WTC11 (cell line): ENCODE measurements at regions of chr19 and their contacts with region 1.

Region 1: GRCh38 chr19:13277104-13277809 is 127.0 kb downstream of the IER2 start:
- DNase-seq: peak; percentile 48
- ATAC-seq: peak; percentile 76
- H3K4me3 Mint-ChIP-seq: no peak overlapping the region
- H3K27ac Mint-ChIP-seq: no peak overlapping the region
- H3K4me1 Mint-ChIP-seq: peaks cover 6% of the 10 kb centered on the region
- H3K27me3 Mint-ChIP-seq: no peaks in the 10 kb centered on the region
- CTCF ChIP-seq: peak; percentile 65

Region 2: DNA sequence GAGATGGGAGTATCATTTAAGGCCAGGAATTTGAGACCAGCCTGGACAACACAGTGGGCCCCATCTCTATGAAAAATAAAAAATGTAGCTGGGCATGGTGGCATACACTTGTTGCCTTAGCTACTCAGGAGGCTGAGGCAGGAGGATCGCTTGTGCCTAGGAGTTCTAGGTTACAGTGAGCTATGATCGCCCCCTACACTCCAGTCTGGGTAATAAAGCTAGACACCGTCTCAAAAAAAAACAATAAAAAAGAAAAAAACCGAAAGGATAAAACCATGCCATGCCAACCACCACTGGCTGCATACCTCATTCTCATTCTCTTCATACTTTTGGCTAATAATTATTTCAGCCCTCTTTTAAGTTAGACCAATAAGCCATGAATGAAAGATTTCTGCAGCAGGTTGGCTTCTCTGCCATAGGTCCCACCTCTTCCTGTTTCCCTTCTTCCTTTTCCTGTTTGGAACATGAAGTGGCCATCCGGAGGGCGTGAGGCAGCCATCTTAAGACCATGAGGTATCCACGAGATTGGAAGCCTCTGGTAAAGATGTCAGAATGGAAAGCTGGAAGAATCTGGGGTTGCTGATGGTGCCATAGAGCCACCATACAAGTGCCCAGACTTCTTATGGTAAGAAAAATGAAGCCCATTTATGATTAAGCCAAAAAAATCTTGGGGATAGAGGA is 57.7 kb after region 1 on chr19:
- CTCF ChIA-PET with region 1: interaction called, 14 read pairs
- POLR2A ChIA-PET with region 1: no interaction called
- DNase-seq: no peak
- ATAC-seq: no peak
- H3K4me3 Mint-ChIP-seq: no peak overlapping the region
- H3K27ac Mint-ChIP-seq: no peak overlapping the region
- H3K4me1 Mint-ChIP-seq: peaks cover 9% of the 10 kb centered on the region
- H3K27me3 Mint-ChIP-seq: no peaks in the 10 kb centered on the region; the same call in 1 of the 2 replicates
- CTCF ChIP-seq: no peak

Region 3: DNA sequence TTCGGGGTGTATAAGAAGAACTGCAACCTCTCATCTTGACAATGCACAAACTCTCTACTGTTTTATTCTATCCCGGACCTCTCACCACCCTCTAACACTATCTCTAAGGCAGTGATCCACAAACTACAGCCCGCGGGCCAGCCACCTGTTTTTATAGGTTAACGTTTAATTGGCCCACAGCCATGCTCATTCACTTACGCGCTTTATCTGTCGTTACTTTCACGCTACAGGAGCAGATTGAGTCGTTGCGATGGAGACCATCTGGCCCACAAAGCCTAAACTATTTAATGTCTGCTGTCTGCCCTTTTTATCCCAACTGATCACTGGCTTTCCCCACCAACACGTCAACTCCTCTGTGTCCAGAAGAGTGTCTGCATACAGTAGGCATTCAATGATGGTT is 70.1 kb after region 1 on chr19:
- CTCF ChIA-PET with region 1: no interaction called
- POLR2A ChIA-PET with region 1: no interaction called
- DNase-seq: no peak
- ATAC-seq: no peak
- H3K4me3 Mint-ChIP-seq: no peak overlapping the region
- H3K27ac Mint-ChIP-seq: no peak overlapping the region
- H3K4me1 Mint-ChIP-seq: no peaks in the 10 kb centered on the region
- H3K27me3 Mint-ChIP-seq: no peaks in the 10 kb centered on the region
- CTCF ChIP-seq: no peak

Region 4: GRCh38 chr19:13574933-13575332 is 297.7 kb after region 1 on chr19:
- CTCF ChIA-PET with region 1: interaction called, 23 read pairs
- POLR2A ChIA-PET with region 1: no interaction called
- DNase-seq: peak; percentile 47
- ATAC-seq: peak; percentile 53; the same call in 1 of the 2 replicates
- H3K4me3 Mint-ChIP-seq: no peak overlapping the region
- H3K27ac Mint-ChIP-seq: no peak overlapping the region
- H3K4me1 Mint-ChIP-seq: peaks cover 3% of the 10 kb centered on the region; the same call in 1 of the 2 replicates
- H3K27me3 Mint-ChIP-seq: peaks cover 10% of the 10 kb centered on the region
- CTCF ChIP-seq: no peak